ENCODE measurements at regions of chr2 and their contacts with region 1.

Region 1: DNA sequence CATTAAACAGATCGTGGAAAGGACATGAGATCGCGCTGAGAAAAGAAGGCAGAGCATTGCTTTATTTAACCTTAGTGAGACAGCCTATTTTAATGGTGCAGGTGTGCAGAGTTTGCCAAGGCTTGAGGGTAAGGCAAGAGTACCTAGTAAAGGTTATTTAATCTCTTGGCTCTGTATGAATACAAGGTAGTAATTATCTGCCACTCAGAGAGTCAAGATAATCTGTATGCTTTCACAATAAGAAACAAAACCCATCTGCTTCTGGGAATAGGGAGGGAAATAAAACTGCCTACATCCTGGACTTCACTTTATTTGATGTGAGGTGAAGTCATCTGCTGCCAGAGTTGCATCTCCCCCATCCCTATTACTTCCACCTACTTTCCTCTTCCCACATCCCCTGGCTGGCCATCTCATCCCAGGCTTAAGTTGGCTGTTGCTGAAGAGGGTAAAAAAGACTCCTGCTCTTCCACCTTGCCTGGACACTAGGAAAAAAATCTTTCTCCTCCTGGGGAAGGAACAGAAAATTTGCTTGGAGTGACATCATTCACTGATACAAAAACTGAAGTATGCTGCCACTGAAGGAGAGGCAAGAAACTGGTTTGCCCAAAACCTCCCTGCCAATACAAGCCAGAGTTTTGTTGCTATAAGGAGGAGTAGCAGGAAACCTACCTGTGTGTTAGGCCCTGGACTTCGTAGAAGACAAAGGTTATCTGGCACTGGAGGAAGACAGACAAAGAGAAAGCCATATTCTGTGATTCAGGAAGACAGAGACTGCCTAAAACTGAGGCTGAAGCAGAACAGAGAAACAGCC is 35.8 kb upstream of the ARHGAP25 start:
- DNase-seq: no peak
- H3K4me3 ChIP-seq: no peak overlapping the region
- H3K27ac ChIP-seq: no peak overlapping the region
- H3K4me1 ChIP-seq: no peaks in the 10 kb centered on the region
- H3K27me3 ChIP-seq: no peaks in the 10 kb centered on the region
- CTCF ChIP-seq: no peak

Region 2: DNA sequence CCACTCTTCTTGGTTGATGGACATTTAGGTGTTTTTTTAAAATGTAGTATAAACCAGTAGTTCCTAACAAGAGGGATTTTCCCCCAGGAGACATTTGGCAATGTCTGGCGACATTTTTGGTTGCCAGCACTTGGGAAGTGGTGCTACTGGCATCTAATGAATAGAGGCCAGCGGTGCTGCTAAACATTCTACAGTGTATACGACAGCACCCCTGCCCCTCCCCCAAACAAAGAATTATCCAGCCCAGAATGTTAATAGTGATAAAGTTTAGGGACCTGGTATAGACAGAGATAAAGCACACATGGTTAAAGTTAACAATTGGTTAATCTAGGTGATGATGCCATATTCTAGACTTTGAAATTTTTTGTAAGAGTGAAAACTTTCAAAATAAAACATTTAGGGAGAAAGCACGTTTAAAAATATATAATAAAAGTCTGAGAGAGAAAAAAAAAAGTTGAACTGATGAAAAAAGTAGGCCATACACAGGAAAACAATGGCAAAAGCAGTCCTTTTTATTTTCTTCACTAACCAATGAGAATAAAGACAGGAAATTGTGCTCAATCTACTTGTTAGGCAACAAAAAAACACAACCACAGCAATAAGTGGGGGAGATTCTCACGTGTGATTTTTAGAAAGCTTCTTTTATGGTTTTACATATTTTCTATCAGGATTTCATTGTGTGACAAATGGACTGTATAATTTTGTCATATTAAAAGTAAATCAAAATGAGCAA is 246.4 kb before region 1 on chr2:
- CTCF ChIA-PET with region 1: no interaction called
- POLR2A ChIA-PET with region 1: interaction called, 12 read pairs
- intact Hi-C with region 1: no loop called
- DNase-seq: no peak
- H3K4me3 ChIP-seq: no peak overlapping the region
- H3K27ac ChIP-seq: no peak overlapping the region
- H3K4me1 ChIP-seq: no peaks in the 10 kb centered on the region
- H3K27me3 ChIP-seq: no peaks in the 10 kb centered on the region
- CTCF ChIP-seq: no peak

Region 3: DNA sequence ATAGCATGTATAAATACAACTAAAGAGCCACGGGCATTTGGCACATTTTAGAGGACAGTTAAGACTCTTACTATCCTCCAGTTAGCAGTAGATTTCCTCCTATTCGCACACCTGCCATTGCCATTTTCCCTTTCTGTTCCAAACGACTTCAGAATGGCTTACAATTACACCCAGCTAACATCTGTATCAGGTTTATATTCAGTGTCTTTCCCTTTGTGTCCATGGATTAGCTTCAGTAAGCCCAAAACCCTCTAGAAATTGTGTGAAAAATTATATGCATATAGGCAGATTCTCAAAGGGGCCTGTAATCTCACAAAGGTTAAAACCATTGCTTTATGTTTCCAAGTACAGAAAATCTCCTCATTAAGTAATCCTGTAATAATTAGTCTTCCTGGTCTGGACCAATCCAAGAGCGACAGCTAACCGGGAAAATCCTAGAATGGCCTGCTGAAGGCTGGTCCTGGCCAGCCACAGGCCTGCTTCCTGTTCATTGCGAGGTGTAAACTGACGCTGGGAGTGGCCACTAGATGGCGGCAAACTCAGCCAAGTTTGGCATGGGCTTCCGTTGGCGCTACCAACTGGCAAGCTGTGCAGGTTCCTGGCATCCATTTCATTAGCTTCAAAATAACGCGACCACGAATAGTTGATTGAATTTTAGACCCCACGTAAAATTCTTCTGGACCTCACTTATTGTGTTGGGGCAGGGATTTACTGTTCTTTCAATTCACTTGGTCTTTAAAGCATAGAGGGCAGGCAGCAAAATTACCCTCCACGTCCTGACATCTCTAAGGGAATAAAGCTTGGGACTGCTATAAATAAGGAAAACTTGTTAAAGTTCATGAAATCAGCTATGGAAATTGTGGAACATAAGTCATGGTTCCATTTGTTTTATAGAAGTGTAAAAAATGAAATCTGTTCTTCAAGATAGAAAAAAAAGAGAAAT is 52.9 kb after region 1 on chr2:
- CTCF ChIA-PET with region 1: no interaction called
- POLR2A ChIA-PET with region 1: no interaction called
- intact Hi-C with region 1: no loop called
- DNase-seq: peak; percentile 59 to 79
- H3K4me3 ChIP-seq: no peak overlapping the region
- H3K27ac ChIP-seq: no peak overlapping the region
- H3K4me1 ChIP-seq: no peaks in the 10 kb centered on the region
- H3K27me3 ChIP-seq: no peaks in the 10 kb centered on the region
- CTCF ChIP-seq: peak; percentile 85

Measured in PC-9 (cell line).